Posterior vena cava (tissue), 2 donors: ENCODE measurements at regions of chr16 and their contacts with region 1.

Region 1: DNA sequence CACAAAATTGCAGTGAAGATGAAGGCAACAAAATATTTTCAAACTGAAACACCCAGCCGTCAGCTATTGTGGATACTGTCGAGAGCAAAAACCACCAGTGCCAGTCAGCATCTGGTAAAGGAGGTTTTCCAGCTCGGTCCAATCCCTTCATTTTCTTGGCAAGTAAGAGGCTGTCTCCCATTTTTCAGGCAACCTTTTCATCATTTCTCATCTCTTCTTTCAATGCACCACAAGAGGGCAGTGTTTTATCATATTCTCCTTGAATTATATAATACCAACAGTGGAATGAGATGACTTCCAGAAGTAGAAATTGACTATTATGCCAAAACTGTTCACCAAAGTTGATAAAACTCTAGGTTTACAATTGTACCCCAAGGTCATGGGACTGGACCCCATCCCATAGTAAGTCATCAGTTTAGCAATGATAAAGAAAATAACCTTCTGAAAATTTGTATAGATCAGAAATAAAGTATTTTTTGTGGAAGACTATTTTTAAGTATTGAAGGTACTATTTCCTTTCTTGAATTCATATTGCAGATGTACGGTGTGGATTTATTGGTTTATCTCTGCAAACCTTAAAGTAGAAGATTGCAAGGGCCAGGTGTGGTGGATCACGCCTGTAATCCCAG is 16.8 kb downstream of the NQO1 start:
- DNase-seq: no peak

Region 2: DNA sequence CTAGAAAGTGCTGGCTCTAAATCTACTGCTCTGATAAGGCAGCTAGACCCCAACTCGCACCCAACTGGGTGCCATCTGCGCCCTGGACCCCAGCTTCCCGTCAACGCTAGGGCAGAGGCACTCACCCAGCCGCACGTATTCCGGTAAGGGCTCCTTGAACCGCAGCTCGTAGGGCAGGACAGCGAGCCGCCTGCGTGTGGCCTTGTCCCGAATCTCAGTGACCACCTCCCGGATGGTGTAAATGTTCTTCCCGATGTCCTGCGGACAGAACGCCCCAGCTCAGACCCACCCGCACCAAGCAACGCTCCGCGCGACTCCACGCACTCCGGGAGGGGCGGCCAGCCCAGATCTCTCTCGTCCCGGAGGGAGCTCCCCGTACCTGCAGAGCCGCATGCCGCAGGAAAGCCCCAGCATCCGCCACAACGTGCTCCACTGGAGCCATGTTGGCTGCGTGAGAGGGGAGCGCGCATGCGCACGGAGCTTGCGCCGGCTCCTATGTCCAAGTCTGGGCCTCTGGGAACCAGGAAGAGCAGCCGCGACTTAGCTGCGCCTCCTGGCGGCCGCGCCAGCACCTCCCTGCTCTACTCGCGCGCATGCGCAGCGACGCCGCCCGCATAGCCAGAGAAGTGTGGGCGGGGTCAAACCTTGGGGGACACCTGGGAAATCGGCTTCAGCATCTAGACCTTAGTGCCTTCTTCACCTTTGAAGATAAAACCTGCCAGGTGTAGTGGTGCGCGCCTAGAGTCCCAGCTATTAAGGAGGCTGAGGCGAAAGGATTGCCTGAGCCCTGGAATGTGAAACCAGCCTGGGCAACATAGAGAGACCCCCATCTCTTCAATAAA is 45.1 kb after region 1 on chr16 and contains the start of gene NOB1:
- intact Hi-C with region 1: loop called (anchors 2 to 5 kb)
- DNase-seq: peak; percentile 99
- total RNA-seq, gene NOB1: 24.2 to 25.3 TPM